ENCODE measurements at regions of chr1 and their contacts with region 1.

Region 1: DNA sequence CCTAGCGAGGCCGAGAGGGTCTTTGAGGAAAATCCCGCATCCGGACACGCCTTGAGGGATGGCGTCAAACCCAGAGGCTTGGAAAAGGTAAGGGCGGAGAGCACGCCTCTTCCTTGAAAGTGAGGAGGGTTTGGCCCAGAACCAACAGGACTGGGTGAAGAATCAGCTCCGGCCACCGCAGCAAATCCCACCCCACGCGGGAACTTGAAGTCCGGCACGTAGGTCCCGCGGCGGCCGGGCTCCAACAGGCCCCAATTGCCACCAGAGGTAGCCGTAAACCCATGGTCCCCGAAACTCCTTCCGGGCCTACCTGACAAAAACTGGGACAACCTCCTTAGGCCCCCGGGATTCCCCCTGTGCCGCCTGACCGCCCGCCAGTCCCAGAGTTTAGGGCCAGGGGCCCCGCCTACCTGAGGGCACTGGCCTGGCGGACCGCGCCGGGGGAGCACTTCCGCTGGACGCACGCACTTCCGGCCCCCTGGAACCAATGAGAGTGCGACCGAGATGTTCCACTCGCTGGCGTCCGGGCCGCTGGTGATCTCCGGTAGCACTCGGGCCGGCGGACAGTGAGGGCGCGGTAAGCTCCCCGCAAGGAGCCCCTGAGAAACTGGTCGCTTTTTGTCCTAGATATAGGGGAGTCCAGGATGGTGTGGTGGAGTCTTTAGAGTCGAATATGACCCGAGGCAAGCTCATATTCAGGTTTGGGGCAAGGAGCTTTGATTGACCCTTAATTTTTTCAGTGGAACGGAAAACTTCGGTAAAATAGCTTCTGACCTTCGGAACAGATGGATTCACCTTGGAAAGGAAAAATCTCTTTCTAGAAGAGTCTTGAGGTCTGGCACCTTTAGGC is at the starts of genes LZIC and NMNAT1:
- DNase-seq: peak; percentile 95
- ATAC-seq: peak; percentile 97
- H3K4me3 Mint-ChIP-seq: peak within 1 kb of the TSS; percentile 98
- H3K27ac Mint-ChIP-seq: peak within 1 kb of the TSS; percentile 92
- H3K4me1 Mint-ChIP-seq: peaks cover 20% of the 10 kb centered on the region
- H3K27me3 Mint-ChIP-seq: no peaks in the 10 kb centered on the region
- CTCF ChIP-seq: no peak
- total RNA-seq, gene LZIC: 23.9 to 24.2 TPM
- total RNA-seq, gene NMNAT1: 7.7 to 9.6 TPM

Region 2: DNA sequence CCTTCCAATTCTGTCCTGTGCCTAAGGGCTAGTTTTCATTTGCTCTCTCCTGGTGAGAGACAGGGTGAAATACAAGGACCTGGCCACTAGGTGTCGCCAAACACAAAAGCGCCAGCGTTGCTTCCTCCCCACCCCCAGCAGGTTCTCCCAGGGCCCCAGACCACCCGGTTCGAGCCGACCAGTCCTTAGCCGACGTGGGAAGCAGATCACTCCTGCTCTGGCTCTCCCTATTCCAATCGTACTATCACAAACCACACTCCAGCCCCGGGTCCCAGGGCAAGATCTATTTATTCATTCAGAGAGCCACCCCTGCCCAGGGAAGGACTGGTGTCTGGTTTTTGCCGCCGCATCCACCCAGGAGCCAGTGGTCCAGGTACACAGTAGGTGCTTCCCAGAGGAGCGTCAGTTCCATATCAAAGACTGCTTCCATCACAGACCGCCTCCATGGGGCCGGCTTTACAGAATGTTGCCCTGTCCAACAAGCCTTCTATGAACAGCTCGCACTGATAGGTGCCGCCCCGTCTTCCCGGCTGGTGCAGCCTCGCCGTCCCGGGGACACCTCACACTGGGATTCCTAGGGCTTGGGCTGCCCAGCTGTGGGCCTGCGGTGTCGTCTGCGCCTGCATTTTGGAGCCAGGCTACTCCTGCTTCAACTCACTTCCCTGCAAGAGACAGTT is 68.1 kb before region 1 on chr1:
- CTCF ChIA-PET with region 1: interaction called, 68 read pairs
- POLR2A ChIA-PET with region 1: interaction called, 3 read pairs
- intact Hi-C with region 1: loop called (anchors 2 kb)
- DNase-seq: peak; percentile 83
- ATAC-seq: peak; percentile 99
- H3K4me3 Mint-ChIP-seq: no peak overlapping the region
- H3K27ac Mint-ChIP-seq: no peak overlapping the region
- H3K4me1 Mint-ChIP-seq: peaks cover 4% of the 10 kb centered on the region
- H3K27me3 Mint-ChIP-seq: no peaks in the 10 kb centered on the region
- CTCF ChIP-seq: peak; percentile 95

Region 3: DNA sequence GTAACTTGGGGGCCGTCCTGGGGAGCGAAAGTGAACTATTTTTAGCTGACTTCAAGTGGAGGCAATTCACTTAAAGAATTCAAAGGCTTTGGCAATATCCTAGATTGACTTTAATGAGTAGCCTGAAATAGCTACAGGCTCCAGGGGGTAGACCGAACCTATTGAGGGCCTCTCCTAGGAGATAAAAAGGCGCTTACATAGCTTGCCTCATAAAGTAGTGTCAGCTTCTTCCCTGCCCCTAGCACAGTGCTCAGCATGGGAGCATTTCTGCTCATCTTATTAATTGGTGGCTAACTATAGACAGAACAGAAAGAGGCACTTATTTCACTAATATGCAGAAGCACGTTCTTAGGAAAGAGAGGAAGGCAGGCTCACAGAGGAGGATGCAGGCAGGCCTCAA is 20.8 kb before region 1 on chr1:
- CTCF ChIA-PET with region 1: no interaction called
- POLR2A ChIA-PET with region 1: no interaction called
- intact Hi-C with region 1: no loop called
- DNase-seq: no peak
- ATAC-seq: no peak
- H3K4me3 Mint-ChIP-seq: no peak overlapping the region
- H3K27ac Mint-ChIP-seq: no peak overlapping the region
- H3K4me1 Mint-ChIP-seq: no peaks in the 10 kb centered on the region
- H3K27me3 Mint-ChIP-seq: no peaks in the 10 kb centered on the region
- CTCF ChIP-seq: no peak

Region 4: DNA sequence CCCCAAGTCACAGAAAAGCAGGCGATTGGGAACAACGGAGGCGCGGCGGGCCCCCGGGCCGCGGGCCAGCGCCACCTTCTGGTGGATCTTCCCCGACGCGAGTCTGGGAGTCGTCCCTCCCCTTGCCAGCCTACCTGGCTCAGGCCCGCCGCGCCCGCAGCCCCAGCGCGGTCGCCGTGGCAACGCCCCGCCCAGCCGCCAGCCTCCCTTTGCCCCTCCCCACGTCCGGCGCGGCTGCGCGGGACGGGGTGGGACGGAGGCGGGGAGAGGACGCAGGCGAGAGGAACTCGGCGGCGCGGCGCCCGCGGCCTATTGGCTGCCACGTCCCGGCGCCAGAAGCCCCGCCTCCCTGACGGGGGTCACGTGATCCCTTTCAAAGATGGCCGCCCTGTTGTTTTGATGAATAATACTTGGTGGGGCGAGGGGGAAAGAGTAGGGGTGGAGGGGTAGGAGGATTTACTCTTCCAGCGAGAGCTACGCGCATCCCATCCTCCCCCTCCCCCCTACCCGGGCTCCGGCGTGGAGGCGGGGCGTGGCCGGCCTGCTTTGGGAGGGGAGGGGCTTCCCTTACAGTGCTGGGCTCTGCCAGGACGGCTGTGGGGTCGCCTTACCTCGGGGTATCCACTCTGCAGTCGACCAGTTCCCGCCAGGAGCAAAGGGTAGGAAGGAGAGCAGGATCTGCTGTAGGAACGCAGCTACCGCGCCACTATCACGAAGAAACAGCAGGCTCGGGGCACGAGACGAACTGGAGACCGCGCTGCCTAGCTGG is 89.6 kb after region 1 on chr1 and contains the start of gene UBE4B:
- CTCF ChIA-PET with region 1: no interaction called
- POLR2A ChIA-PET with region 1: interaction called, 8 read pairs
- intact Hi-C with region 1: loop called (anchors 10 kb)
- DNase-seq: peak; percentile 99
- ATAC-seq: peak; percentile 97
- H3K4me3 Mint-ChIP-seq: peak within 1 kb of the TSS; percentile 87
- H3K27ac Mint-ChIP-seq: peak within 1 kb of the TSS; percentile 93
- H3K4me1 Mint-ChIP-seq: peaks cover 18% of the 10 kb centered on the region
- H3K27me3 Mint-ChIP-seq: no peaks in the 10 kb centered on the region
- CTCF ChIP-seq: no peak
- total RNA-seq, gene UBE4B: 21.0 to 26.2 TPM